ENCODE measurements at regions of chr3 and their contacts with region 1.

Region 1: GRCh38 chr3:56725175-56725574 is 42.1 kb upstream of the TASOR start:
- DNase-seq: peak; percentile 89
- ATAC-seq: peak; percentile 89
- H3K4me3 Mint-ChIP-seq: peak overlapping the region; percentile 63
- H3K27ac Mint-ChIP-seq: peak overlapping the region; percentile 95
- H3K4me1 Mint-ChIP-seq: peaks cover 58% of the 10 kb centered on the region
- H3K27me3 Mint-ChIP-seq: no peaks in the 10 kb centered on the region
- CTCF ChIP-seq: no peak

Region 2: GRCh38 chr3:56758539-56758981 is 33.4 kb after region 1 on chr3:
- CTCF ChIA-PET with region 1: interaction called, 5 read pairs
- POLR2A ChIA-PET with region 1: interaction called, 7 read pairs
- intact Hi-C with region 1: loop called (anchors 5 kb)
- DNase-seq: peak; percentile 74
- ATAC-seq: peak; percentile 74
- H3K4me3 Mint-ChIP-seq: peak overlapping the region; percentile 52
- H3K27ac Mint-ChIP-seq: peak overlapping the region; percentile 93
- H3K4me1 Mint-ChIP-seq: peaks cover 86% of the 10 kb centered on the region
- H3K27me3 Mint-ChIP-seq: no peaks in the 10 kb centered on the region
- CTCF ChIP-seq: no peak